ENCODE measurements at regions of chr19 and their contacts with region 1.

Region 1: GRCh38 chr19:11821474-11822109 is 7.5 kb downstream of the ZNF440 start:
- DNase-seq: no peak

Region 2: DNA sequence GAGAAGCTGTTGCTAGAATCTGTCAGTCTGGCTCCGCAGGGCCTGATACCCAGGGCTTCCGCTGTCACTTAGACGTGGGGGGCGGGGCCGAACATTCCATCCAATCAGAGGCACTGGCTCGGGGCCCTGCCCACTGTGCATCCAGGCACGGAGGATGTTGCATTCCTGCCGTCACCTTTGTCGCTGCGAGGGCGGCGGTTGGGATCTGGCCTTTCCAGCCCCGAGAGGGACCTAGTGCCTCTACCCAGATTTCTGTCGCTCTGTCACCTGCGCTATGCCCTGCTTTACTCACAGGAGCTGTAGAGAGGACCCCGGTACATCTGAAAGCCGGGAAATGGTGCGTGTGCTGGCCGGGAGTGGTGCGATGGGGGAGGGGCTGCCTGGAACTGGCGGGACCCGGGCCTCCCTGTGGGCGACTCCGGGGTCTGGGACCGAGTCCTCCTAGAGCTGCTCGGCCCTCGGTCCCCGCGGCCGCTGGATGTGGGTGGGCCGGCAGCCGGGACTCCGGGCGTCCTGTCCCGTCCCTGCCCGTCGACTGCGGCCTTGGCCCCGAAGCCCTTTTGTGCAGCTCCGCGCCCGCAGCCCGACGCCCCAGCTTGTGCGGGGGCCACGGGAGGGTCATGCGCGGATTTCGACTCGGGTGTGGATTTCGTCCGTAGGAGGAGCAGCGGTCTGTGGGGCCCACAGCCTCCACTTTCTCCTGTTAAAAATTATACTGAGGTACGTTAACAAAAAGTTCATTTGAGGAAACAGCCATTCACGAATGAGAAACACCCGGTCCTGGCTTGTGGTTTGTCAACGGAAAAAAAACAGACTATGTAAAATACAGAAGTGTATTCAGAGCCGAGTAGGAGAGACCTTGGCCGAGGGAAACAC is 27.2 kb after region 1 on chr19 and contains the start of gene ZNF439:
- intact Hi-C with region 1: loop called in 1 of 2 experiments (anchors 1 kb)
- DNase-seq: peak; percentile 96
- total RNA-seq, gene ZNF439: 5.4 to 6.0 TPM